Activated CD8-positive, alpha-beta memory T cell treated with anti-CD3 and anti-CD28 coated beads, Interleukin-2, amount 10 ng/mL, durations not matched to agents 7 days and 5 days (primary cell): ENCODE measurements at regions of chr17 and their contacts with region 1.

Region 1: GRCh38 chr17:7351665-7352501 is at the start of gene KCTD11:
- DNase-seq: peak; percentile 91
- ATAC-seq: peak; percentile 69
- H3K4me3 Mint-ChIP-seq: peak within 1 kb of the TSS; percentile 78
- H3K27ac Mint-ChIP-seq: peak within 1 kb of the TSS; percentile 86
- H3K4me1 Mint-ChIP-seq: peaks cover 56% of the 10 kb centered on the region
- H3K27me3 Mint-ChIP-seq: no peaks in the 10 kb centered on the region
- total RNA-seq, gene KCTD11: 6.0 to 6.1 TPM

Region 2: GRCh38 chr17:6981426-6981825 is 370.5 kb before region 1 on chr17:
- CTCF ChIA-PET with region 1: no interaction called
- DNase-seq: no peak
- ATAC-seq: no peak
- H3K4me3 Mint-ChIP-seq: no peak overlapping the region
- H3K27ac Mint-ChIP-seq: no peak overlapping the region
- H3K4me1 Mint-ChIP-seq: peaks cover 11% of the 10 kb centered on the region
- H3K27me3 Mint-ChIP-seq: peaks cover 4% of the 10 kb centered on the region

Region 3: GRCh38 chr17:7323731-7324437 is 28.0 kb before region 1 on chr17:
- CTCF ChIA-PET with region 1: interaction called, 22 read pairs
- DNase-seq: peak; percentile 72
- ATAC-seq: peak; percentile 54
- H3K4me3 Mint-ChIP-seq: no peak overlapping the region
- H3K27ac Mint-ChIP-seq: no peak overlapping the region
- H3K4me1 Mint-ChIP-seq: peaks cover 20% of the 10 kb centered on the region
- H3K27me3 Mint-ChIP-seq: no peaks in the 10 kb centered on the region

Region 4: GRCh38 chr17:7336240-7337175 is 15.4 kb before region 1 on chr17 and contains the start of gene ACAP1:
- CTCF ChIA-PET with region 1: interaction called, 61 read pairs
- DNase-seq: peak; percentile 96
- ATAC-seq: peak; percentile 95
- H3K4me3 Mint-ChIP-seq: peak within 1 kb of the TSS; percentile 93
- H3K27ac Mint-ChIP-seq: peak within 1 kb of the TSS; percentile 96
- H3K4me1 Mint-ChIP-seq: peaks cover 48% of the 10 kb centered on the region
- H3K27me3 Mint-ChIP-seq: no peaks in the 10 kb centered on the region
- total RNA-seq, gene ACAP1: 594 to 712 TPM

Region 5: GRCh38 chr17:7383742-7384488 is 32.0 kb after region 1 on chr17:
- CTCF ChIA-PET with region 1: interaction called, 10 read pairs
- DNase-seq: peak; percentile 81
- ATAC-seq: peak; percentile 99
- H3K4me3 Mint-ChIP-seq: peak overlapping the region; percentile 72
- H3K27ac Mint-ChIP-seq: peak overlapping the region; percentile 68
- H3K4me1 Mint-ChIP-seq: peaks cover 7% of the 10 kb centered on the region
- H3K27me3 Mint-ChIP-seq: peaks cover 33% of the 10 kb centered on the region

Region 6: DNA sequence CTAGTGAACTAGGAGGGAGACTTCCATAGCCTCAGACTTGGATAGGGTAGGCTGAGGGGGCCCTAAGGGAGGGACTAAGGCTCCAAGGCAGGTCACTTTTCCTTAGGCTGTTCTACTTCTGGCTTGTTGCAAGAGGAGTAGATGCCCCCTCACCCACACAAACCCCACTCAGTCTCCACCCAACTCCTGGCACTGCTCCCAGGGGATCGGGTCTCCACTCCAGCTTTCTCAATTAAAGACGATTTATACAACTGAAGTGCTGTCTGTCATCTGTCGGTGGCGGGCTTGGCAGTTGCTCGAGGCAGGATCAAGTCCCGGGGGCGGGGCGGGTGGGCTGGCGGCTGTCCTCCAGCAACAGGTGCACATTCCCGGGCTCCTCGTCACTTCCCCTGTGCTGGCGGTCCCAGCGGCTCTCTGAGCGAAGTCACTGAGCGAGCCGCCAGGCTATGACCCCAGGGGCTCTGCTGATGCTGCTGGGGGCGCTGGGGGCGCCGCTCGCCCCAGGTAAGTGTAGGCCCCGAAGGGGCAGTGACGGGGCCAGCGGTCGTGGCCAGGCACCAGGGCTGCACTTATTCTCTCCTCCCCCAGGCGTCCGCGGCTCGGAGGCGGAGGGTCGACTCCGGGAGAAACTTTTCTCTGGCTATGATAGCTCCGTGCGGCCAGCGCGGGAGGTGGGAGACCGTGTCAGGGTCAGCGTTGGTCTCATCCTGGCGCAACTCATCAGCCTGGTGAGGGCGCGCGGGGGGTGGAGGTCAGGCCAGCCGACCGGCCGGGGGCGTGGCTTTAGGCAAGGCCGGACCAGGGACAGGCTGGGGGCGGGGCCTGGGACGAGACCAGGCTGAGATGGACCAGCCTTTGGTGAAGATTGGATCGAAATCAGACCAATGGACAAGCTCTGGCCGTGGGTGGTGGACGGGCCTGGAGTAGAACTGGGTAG is 93.1 kb after region 1 on chr17 and contains the start of gene CHRNB1:
- CTCF ChIA-PET with region 1: interaction called, 12 read pairs
- DNase-seq: no peak
- ATAC-seq: peak; percentile 40
- H3K4me3 Mint-ChIP-seq: peak within 1 kb of the TSS; percentile 60
- H3K27ac Mint-ChIP-seq: no peak within 1 kb of the TSS
- H3K4me1 Mint-ChIP-seq: peaks cover 22% of the 10 kb centered on the region
- H3K27me3 Mint-ChIP-seq: peaks cover 59% of the 10 kb centered on the region
- total RNA-seq, gene CHRNB1: 10.4 to 13.1 TPM

Region 7: DNA sequence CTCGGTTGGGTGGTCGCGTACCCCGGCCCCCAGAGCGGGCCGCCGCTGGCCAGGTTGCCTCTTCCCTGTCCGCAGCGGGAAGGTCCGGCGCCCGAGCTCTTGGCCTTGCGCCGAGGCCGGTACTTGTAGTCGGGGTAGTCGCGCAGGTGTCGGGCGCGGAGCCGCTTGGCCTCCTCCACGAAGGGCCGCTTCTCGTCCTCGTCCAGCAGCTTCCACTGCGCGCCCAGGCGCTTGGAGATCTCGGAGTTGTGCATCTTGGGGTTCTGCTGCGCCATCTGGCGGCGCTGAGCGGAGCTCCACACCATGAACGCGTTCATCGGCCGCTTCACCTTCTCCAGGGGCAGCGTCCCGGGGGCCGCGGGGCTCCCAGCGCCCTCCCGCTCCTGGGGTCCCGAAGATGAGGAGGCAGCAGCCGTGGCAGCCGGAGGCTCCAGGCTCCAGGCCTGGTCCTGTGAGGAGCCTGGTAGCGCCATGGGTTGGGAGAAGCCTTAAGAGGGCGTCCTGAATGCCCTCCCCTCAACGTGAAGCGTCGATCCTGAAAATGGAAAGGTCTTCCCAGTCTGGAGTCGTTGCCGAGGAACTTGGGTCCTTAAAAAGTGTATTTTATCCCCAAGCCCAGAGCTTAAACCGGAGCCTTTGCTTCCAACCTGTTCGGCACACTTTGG is 237.5 kb after region 1 on chr17:
- CTCF ChIA-PET with region 1: interaction called, 11 read pairs
- DNase-seq: peak; percentile 73
- ATAC-seq: peak; percentile 77
- H3K4me3 Mint-ChIP-seq: no peak overlapping the region
- H3K27ac Mint-ChIP-seq: no peak overlapping the region
- H3K4me1 Mint-ChIP-seq: peaks cover 17% of the 10 kb centered on the region
- H3K27me3 Mint-ChIP-seq: no peaks in the 10 kb centered on the region

Region 8: DNA sequence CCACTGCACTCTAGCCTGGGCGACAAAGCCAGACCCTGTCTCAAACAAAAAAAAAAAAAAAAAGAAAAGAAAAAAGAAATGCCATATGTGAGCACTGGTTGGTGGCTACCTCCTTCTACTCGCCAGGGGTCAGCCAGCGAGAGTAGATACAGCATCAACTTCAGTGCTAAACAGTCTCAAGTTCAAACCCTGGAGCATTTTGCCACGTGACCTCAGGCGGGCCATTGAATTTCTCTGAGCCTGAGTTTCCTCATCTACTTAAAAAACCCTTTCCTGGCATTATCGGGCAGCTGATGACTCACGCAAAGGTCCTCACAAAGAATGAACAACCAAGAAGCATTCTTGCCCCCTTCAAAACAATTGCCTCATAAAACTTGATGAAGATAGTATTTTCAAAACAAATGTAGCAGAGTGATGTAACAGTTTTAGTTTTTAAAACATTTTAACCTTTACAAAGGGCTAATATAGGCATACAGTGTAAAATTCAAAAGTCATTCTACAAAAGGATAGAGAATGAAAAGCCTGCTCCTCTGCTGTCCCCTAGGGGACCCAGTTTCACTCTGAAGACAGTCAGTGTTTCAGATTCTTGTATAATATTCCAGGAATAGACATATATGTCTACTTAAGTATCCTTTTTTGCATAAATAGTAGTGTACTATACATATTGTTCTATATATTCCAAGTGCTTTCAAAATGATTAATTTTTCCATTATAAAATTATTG is 394.0 kb after region 1 on chr17:
- CTCF ChIA-PET with region 1: no interaction called
- DNase-seq: no peak
- ATAC-seq: no peak
- H3K4me3 Mint-ChIP-seq: no peak overlapping the region
- H3K27ac Mint-ChIP-seq: no peak overlapping the region
- H3K4me1 Mint-ChIP-seq: no peaks in the 10 kb centered on the region
- H3K27me3 Mint-ChIP-seq: peaks cover 30% of the 10 kb centered on the region